ENCODE measurements at regions of chr11 and their contacts with region 1.

Region 1: DNA sequence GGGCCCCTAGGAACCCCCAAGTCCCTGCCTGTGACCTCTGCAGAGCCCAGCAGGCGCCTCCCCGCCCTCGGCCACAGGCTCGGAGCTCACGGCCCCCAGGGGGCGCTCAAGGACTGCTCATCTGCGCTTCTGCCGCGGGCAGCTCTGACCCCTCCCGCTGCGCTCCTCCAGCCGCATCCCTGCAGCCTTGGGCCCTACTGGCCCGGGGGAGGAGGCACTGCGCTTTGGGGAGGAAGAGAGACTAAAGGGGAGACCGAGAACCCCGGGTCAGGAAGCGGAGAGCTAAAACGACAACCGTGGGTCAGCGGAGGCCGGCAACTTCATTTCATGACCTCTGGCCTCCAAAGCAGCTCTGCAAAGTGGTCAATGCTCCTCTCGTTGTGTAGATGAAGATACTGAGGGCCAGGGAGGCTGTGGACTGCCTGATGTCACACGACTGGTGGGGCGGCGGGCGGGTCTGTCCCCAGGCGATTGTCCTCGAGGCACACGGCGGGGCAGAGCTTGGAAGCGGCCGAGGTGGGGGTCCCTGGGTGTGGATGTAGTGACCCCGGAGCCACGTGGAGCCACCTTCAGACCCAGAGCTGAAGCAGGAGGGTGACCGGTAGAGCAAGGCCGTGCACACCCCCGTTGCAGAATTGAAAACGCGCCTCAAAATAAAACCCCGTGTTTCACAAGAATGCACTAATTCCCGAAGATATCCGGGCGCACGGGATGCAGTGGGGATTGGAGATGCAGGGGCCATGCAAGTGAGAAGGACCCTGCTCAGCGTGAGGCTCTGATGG is 2.7 kb upstream of the KRTAP5-6 start:
- DNase-seq: peak; percentile 53
- ATAC-seq: peak; percentile 38
- H3K4me3 ChIP-seq: peak overlapping the region in 2 of 3 experiments; percentile 14 to 58; a peak in 3 of 6 replicates
- H3K27ac ChIP-seq: peak overlapping the region; percentile 100
- H3K4me1 ChIP-seq: peaks cover 69% of the 10 kb centered on the region
- H3K27me3 ChIP-seq: peaks cover 0 to 3% of the 10 kb centered on the region in 2 experiments; a peak in 3 of 5 replicates
- CTCF ChIP-seq: peak; percentile 99
- EP300 ChIP-seq: peak in 1 of 2 experiments; percentile 38; a peak in 1 of 4 replicates
- POLR2A ChIP-seq: no peak
- RAD21 ChIP-seq: peak; percentile 97

Region 2: GRCh38 chr11:1453611-1454034 is 240.6 kb before region 1 on chr11:
- CTCF ChIA-PET with region 1: no interaction called
- POLR2A ChIA-PET with region 1: no interaction called
- in situ Hi-C with region 1: no loop called
- intact Hi-C with region 1: no loop called
- DNase-seq: peak; percentile 44
- ATAC-seq: peak; percentile 53
- H3K4me3 ChIP-seq: no peak overlapping the region
- H3K27ac ChIP-seq: no peak overlapping the region
- H3K4me1 ChIP-seq: no peaks in the 10 kb centered on the region
- H3K27me3 ChIP-seq: peaks cover 5 to 25% of the 10 kb centered on the region in 2 experiments; a peak in 4 of 5 replicates
- CTCF ChIP-seq: peak; percentile 63
- EP300 ChIP-seq: no peak
- POLR2A ChIP-seq: no peak
- RAD21 ChIP-seq: peak; percentile 62

Region 3: GRCh38 chr11:1652771-1653540 is 41.3 kb before region 1 on chr11:
- CTCF ChIA-PET with region 1: interaction called, 21 read pairs
- POLR2A ChIA-PET with region 1: interaction called, 122 read pairs
- in situ Hi-C with region 1: loop called (anchors 5 kb)
- intact Hi-C with region 1: loop called (anchors 1 kb)
- DNase-seq: peak; percentile 35
- ATAC-seq: peak; percentile 85
- H3K4me3 ChIP-seq: no peak overlapping the region; a peak in 1 of 6 replicates
- H3K27ac ChIP-seq: peak overlapping the region; percentile 44
- H3K4me1 ChIP-seq: peaks cover 73% of the 10 kb centered on the region
- H3K27me3 ChIP-seq: peaks cover 0 to 7% of the 10 kb centered on the region in 2 experiments; a peak in 2 of 5 replicates
- CTCF ChIP-seq: peak; percentile 96
- EP300 ChIP-seq: no peak
- POLR2A ChIP-seq: no peak
- RAD21 ChIP-seq: peak; percentile 97

Region 4: DNA sequence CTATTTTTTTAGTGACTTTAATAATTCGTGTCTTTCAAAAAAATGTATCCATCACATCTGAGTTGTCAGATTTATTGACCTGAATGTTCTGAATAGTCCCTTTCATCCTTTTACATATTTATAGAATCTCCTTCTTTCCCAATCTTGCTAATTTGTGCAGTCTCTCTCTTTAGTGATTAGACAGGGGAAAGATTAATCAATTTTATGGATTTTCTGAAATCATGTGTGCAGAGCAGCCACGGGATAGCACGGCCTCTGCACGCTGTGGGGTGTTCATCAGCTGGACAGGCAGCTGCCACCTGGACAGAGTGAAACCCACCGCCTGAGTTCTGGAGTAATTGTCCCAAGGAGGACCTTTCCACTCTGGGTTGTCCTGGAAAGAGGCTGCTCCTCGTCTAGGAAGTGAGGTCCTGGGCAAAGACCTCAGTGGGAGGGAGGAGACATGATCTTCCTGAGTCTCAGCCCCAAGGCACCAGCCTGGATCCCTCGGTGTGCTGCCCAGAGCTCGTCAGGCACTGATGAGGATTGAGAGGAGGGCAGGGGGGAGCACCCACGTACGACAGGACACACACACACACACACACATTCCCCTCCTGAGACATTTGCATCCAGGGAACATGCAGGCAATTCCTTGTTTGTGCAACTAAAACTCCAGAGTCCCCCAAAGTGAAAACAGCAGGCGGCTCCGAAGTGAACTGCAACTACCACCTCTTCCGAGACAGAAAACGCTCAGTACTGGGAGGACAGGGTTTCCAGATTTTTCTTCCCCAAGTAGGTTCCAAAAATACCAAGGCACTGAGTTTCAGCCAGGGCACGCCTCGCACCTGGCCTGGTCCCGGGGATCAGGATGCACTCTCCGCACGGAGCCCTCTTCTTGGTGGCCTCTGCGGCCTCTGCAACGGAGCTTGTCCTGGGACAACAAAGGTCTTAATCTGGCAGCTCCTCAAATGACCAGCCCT is 19.8 kb before region 1 on chr11:
- CTCF ChIA-PET with region 1: interaction called, 9 read pairs
- POLR2A ChIA-PET with region 1: interaction called, 141 read pairs
- in situ Hi-C with region 1: no loop called
- intact Hi-C with region 1: loop called (anchors 2 kb)
- DNase-seq: no peak
- ATAC-seq: peak; percentile 71
- H3K4me3 ChIP-seq: peak overlapping the region in 1 of 3 experiments; percentile 38; a peak in 2 of 6 replicates
- H3K27ac ChIP-seq: peak overlapping the region; percentile 95
- H3K4me1 ChIP-seq: peaks cover 93% of the 10 kb centered on the region
- H3K27me3 ChIP-seq: no peaks in the 10 kb centered on the region
- CTCF ChIP-seq: no peak
- EP300 ChIP-seq: no peak
- POLR2A ChIP-seq: peak in 1 of 2 experiments; percentile 51; a peak in 2 of 4 replicates
- RAD21 ChIP-seq: no peak

Region 5: DNA sequence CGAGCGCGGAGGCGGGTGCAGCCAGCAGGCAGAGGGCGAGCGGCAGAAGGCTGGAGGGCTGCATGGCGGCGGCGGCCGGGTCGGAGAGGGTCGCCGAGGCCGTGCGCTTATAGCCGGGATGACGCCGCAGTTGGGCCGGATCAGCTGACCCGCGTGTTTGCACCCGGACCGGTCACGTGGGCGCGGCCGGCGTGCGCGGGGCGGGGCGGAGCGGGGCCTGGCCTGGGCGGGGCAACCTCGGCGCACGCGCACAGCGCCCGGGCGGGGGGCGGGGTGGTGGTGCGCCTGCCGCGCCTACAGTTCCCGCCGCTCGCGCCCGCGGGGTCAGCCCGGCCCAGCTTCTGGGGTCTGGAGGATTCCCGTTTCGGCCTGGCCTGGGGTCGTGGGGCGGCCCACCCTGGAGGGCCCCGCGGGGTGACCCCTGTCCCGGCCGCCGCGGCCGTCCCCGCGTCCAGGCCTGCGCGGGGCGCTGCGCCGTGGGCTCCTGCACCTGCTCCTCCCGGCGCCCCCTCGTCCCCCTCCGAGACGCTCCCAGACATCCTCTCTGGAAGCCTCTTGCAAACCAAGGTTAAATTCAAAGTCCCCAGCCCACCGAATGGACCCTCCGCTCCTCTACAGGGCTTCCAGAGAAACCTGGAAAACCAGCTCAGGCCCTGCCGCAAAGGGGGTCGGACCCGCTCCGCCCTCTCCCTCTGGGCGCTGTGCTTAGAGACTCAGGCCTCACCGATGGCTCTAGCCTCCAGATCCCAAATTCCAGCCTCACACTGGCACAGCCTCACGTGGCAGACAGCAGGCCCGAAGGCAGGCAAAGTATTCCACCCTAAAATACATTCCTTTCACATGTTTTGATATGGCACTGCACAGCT is 69.8 kb after region 1 on chr11 and contains the start of gene CTSD:
- CTCF ChIA-PET with region 1: no interaction called
- POLR2A ChIA-PET with region 1: interaction called, 12 read pairs
- in situ Hi-C with region 1: loop called (anchors 5 kb)
- intact Hi-C with region 1: no loop called
- DNase-seq: peak; percentile 65
- ATAC-seq: peak; percentile 68
- H3K4me3 ChIP-seq: peak within 1 kb of the TSS; percentile 84 to 93 (median 85)
- H3K27ac ChIP-seq: peak within 1 kb of the TSS; percentile 76
- H3K4me1 ChIP-seq: peaks cover 38% of the 10 kb centered on the region
- H3K27me3 ChIP-seq: peaks cover 3 to 22% of the 10 kb centered on the region in 2 experiments; a peak in 4 of 5 replicates
- CTCF ChIP-seq: peak; percentile 9; the same call in 1 of the 2 replicates
- EP300 ChIP-seq: no peak; a peak in 1 of 4 replicates
- POLR2A ChIP-seq: 0 out of 4 replicates have a peak, but pooled peaks of 1 of the 2 experiments have one; percentile 24
- RAD21 ChIP-seq: peak; percentile 24; the same call in 1 of the 2 replicates
- total RNA-seq, gene CTSD: 41.6 and 143 TPM in 2 replicates

Region 6: GRCh38 chr11:1782831-1783724 is 88.8 kb after region 1 on chr11:
- CTCF ChIA-PET with region 1: no interaction called
- POLR2A ChIA-PET with region 1: no interaction called
- in situ Hi-C with region 1: no loop called
- intact Hi-C with region 1: no loop called
- DNase-seq: no peak
- ATAC-seq: no peak
- H3K4me3 ChIP-seq: peak overlapping the region in 1 of 3 experiments; percentile 32; a peak in 1 of 6 replicates
- H3K27ac ChIP-seq: no peak overlapping the region
- H3K4me1 ChIP-seq: peaks cover 27% of the 10 kb centered on the region
- H3K27me3 ChIP-seq: peaks cover 15 to 69% of the 10 kb centered on the region in 2 experiments
- CTCF ChIP-seq: no peak
- EP300 ChIP-seq: no peak
- POLR2A ChIP-seq: no peak
- RAD21 ChIP-seq: no peak

Region 7: GRCh38 chr11:1832211-1832919 is 138.1 kb after region 1 on chr11:
- CTCF ChIA-PET with region 1: interaction called, 44 read pairs
- POLR2A ChIA-PET with region 1: interaction called, 25 read pairs
- in situ Hi-C with region 1: loop called (anchors 5 kb)
- intact Hi-C with region 1: loop called (anchors 2 kb)
- DNase-seq: no peak
- ATAC-seq: peak; percentile 41
- H3K4me3 ChIP-seq: peak overlapping the region in 1 of 3 experiments; percentile 49; a peak in 1 of 6 replicates
- H3K27ac ChIP-seq: no peak overlapping the region
- H3K4me1 ChIP-seq: peaks cover 80% of the 10 kb centered on the region
- H3K27me3 ChIP-seq: peaks cover 0 to 6% of the 10 kb centered on the region in 2 experiments; a peak in 2 of 5 replicates
- CTCF ChIP-seq: peak; percentile 95
- EP300 ChIP-seq: no peak
- POLR2A ChIP-seq: no peak
- RAD21 ChIP-seq: peak; percentile 85

Region 8: DNA sequence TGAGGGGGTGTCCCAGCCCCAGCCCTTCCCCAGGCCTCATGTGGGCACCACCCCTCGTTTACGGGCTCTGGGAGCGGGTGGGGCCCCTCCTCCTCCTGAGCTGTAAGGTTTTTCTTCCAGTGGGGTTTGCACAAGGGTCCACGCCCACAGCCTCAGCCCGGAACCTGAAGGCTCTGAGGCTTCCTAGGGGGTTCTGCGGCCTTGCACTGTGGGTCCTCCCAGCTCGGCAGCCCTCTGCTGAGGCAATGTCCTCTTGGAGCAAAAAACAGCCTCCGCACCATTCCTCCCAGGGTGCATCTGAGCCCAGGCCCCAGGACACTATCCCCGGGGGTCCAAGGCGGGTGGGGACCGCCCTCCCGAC is 289.3 kb after region 1 on chr11:
- CTCF ChIA-PET with region 1: no interaction called
- POLR2A ChIA-PET with region 1: interaction called, 54 read pairs
- in situ Hi-C with region 1: no loop called
- intact Hi-C with region 1: no loop called
- DNase-seq: no peak
- ATAC-seq: no peak
- H3K4me3 ChIP-seq: no peak overlapping the region
- H3K27ac ChIP-seq: peak overlapping the region; percentile 48
- H3K4me1 ChIP-seq: no peaks in the 10 kb centered on the region
- H3K27me3 ChIP-seq: no peaks in the 10 kb centered on the region
- CTCF ChIP-seq: no peak
- EP300 ChIP-seq: no peak
- POLR2A ChIP-seq: no peak
- RAD21 ChIP-seq: no peak